ENCODE measurements at regions of chr7 and their contacts with region 1.

Region 1: GRCh38 chr7:23273141-23273599 is 26.0 kb upstream of the MALSU1 start:
- DNase-seq: peak; percentile 80
- H3K4me3 Mint-ChIP-seq: peak overlapping the region; percentile 72
- H3K27ac Mint-ChIP-seq: peak overlapping the region; percentile 5
- H3K4me1 Mint-ChIP-seq: peaks cover 24% of the 10 kb centered on the region
- H3K27me3 Mint-ChIP-seq: peaks cover 4% of the 10 kb centered on the region

Region 2: DNA sequence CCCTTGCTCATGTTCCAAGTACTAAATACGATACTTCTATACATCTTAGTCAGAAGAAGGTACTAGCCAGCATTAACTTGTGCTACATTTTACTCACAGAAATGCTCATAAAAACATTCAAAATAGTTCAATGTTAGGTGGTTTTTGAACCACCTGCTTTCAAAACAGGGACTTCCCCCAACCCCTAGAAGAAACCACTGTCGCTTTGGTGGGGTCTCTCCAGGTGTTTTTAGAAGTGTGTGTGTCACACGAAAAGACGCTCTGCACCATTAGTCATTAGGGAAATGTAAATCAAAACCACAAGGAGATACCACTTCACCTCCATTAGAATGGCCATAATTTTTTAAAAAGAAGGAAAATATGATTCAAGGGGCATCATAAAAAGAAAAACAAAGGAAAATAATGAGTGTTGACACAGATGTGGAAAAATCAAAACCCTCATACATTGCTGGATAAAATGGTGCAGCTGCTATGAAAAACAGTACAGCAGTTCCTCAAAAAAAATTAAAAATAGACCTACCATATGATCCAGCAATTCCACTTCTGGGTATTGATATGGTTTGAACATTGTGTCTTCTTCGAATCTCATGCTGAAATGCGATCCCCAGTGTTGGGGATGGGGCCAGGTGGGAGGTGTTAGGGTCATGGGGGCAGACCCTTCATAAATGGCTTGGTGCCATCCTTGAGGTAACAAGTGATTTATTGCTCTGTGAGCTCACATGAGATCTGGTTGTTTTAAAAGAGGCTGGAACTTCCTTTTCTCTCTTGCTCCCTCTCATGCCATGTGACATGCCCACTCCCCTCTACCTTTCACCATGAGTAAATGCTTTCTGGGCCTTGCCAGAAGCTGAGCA is 100.2 kb after region 1 on chr7:
- intact Hi-C with region 1: loop called (anchors 1 kb)
- DNase-seq: no peak
- H3K4me3 Mint-ChIP-seq: peak overlapping the region; percentile 9
- H3K27ac Mint-ChIP-seq: peak overlapping the region; percentile 94
- H3K4me1 Mint-ChIP-seq: peaks cover 49% of the 10 kb centered on the region
- H3K27me3 Mint-ChIP-seq: peaks cover 6% of the 10 kb centered on the region

Region 3: GRCh38 chr7:23462846-23463245 is 189.7 kb after region 1 on chr7:
- intact Hi-C with region 1: loop called (anchors 1 kb)
- DNase-seq: no peak
- H3K4me3 Mint-ChIP-seq: no peak overlapping the region
- H3K27ac Mint-ChIP-seq: no peak overlapping the region
- H3K4me1 Mint-ChIP-seq: peaks cover 19% of the 10 kb centered on the region
- H3K27me3 Mint-ChIP-seq: peaks cover 75% of the 10 kb centered on the region

Region 4: GRCh38 chr7:23523486-23524075 is 250.4 kb after region 1 on chr7:
- intact Hi-C with region 1: loop called (anchors 2 kb)
- DNase-seq: no peak
- H3K4me3 Mint-ChIP-seq: no peak overlapping the region
- H3K27ac Mint-ChIP-seq: no peak overlapping the region
- H3K4me1 Mint-ChIP-seq: peaks cover 57% of the 10 kb centered on the region
- H3K27me3 Mint-ChIP-seq: no peaks in the 10 kb centered on the region

Region 5: GRCh38 chr7:23558303-23558702 is 285.1 kb after region 1 on chr7:
- intact Hi-C with region 1: no loop called
- DNase-seq: no peak
- H3K4me3 Mint-ChIP-seq: no peak overlapping the region
- H3K27ac Mint-ChIP-seq: no peak overlapping the region
- H3K4me1 Mint-ChIP-seq: no peaks in the 10 kb centered on the region
- H3K27me3 Mint-ChIP-seq: peaks cover 12% of the 10 kb centered on the region

Region 6: GRCh38 chr7:23712368-23713284 is 439.5 kb after region 1 on chr7:
- intact Hi-C with region 1: loop called (anchors 1 kb)
- DNase-seq: no peak
- H3K4me3 Mint-ChIP-seq: no peak overlapping the region
- H3K27ac Mint-ChIP-seq: no peak overlapping the region
- H3K4me1 Mint-ChIP-seq: no peaks in the 10 kb centered on the region
- H3K27me3 Mint-ChIP-seq: peaks cover 3% of the 10 kb centered on the region